ENCODE measurements at regions of chr7 and their contacts with region 1.

Region 1: DNA sequence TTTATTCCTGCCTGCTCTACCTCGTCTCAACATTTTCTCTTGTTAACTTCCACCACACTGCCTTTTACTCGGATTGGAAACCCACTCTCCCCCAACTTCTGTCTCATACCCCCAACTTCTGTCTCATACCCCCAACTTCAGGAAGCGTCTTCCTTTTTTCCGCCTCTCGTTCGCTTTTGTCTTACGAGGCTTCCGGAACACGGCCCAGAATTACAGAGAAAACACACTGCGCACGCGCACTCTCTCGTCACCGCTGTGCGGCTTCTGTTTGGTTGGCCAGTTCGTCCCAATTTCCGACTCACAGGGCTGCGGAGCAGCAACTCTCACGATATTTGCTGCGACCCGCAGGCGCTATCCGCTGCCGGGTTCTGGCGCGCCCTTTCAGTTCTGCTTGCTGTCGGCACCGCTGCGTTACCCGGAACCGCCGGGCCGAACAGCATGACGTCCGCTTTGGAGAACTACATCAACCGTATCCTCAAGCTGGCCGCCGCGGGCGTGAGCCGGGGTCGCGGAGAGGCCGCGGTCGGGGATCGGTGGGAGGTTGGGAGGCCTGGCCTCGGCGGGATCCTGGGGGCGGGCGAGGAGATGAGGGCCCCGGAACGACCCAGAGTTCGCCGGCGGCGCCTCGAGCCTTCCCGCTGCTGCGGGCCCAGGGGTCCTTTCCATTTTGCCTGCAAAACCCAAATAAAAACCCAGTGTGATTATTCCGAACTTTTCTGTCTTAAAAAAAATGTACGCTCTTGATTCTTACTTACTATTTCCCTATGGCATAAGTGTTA is at the start of gene LSM8:
- DNase-seq: peak; percentile 98
- H3K4me3 Mint-ChIP-seq: peak within 1 kb of the TSS; percentile 95
- H3K27ac Mint-ChIP-seq: peak within 1 kb of the TSS; percentile 98
- H3K4me1 Mint-ChIP-seq: peaks cover 32% of the 10 kb centered on the region
- H3K27me3 Mint-ChIP-seq: no peaks in the 10 kb centered on the region
- total RNA-seq, gene LSM8: 39.1 to 43.3 TPM

Region 2: GRCh38 chr7:116953727-116954442 is 1230.1 kb before region 1 on chr7:
- CTCF ChIA-PET with region 1: no interaction called
- intact Hi-C with region 1: loop called (anchors 1 kb)
- DNase-seq: peak; percentile 40
- H3K4me3 Mint-ChIP-seq: peak overlapping the region; percentile 92
- H3K27ac Mint-ChIP-seq: peak overlapping the region; percentile 87
- H3K4me1 Mint-ChIP-seq: peaks cover 21% of the 10 kb centered on the region
- H3K27me3 Mint-ChIP-seq: no peaks in the 10 kb centered on the region

Region 3: GRCh38 chr7:118080947-118081346 is 103.0 kb before region 1 on chr7:
- CTCF ChIA-PET with region 1: no interaction called
- intact Hi-C with region 1: loop called (anchors 2 kb)
- DNase-seq: peak; percentile 65
- H3K4me3 Mint-ChIP-seq: no peak overlapping the region
- H3K27ac Mint-ChIP-seq: no peak overlapping the region
- H3K4me1 Mint-ChIP-seq: peaks cover 16% of the 10 kb centered on the region
- H3K27me3 Mint-ChIP-seq: peaks cover 36% of the 10 kb centered on the region

Region 4: DNA sequence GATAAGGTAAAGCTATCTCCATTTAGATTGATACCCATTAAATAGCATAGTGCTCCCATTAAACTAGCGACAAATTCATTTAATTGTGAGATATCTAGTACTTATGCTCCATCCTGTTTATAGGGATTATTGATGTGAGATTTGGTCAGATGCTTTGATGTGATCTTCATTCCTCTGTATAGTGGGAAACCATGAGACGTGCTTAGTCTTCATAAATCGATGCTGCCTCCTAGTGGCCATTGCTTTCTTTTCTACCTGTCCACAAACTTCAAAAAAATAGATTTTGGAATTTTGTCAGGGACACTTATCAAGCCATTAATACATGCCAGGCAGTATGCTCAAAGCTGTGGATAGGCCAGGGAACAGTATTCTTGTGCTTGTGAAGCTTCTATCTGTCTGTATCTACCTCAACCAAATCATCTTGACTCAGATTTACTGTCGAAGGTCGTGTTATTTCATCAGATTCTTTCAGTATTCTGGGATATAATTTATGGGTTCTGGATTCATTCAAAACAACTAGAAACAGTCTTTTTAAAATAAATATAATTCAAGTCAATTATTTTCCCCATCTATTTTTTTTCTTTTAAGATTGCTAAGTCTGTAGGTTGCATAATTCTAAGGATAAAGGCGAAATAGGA is 12.0 kb after region 1 on chr7:
- CTCF ChIA-PET with region 1: interaction called, 4 read pairs
- intact Hi-C with region 1: loop called (anchors 1 kb)
- DNase-seq: peak; percentile 76
- H3K4me3 Mint-ChIP-seq: no peak overlapping the region
- H3K27ac Mint-ChIP-seq: no peak overlapping the region
- H3K4me1 Mint-ChIP-seq: peaks cover 2% of the 10 kb centered on the region
- H3K27me3 Mint-ChIP-seq: no peaks in the 10 kb centered on the region

Region 5: DNA sequence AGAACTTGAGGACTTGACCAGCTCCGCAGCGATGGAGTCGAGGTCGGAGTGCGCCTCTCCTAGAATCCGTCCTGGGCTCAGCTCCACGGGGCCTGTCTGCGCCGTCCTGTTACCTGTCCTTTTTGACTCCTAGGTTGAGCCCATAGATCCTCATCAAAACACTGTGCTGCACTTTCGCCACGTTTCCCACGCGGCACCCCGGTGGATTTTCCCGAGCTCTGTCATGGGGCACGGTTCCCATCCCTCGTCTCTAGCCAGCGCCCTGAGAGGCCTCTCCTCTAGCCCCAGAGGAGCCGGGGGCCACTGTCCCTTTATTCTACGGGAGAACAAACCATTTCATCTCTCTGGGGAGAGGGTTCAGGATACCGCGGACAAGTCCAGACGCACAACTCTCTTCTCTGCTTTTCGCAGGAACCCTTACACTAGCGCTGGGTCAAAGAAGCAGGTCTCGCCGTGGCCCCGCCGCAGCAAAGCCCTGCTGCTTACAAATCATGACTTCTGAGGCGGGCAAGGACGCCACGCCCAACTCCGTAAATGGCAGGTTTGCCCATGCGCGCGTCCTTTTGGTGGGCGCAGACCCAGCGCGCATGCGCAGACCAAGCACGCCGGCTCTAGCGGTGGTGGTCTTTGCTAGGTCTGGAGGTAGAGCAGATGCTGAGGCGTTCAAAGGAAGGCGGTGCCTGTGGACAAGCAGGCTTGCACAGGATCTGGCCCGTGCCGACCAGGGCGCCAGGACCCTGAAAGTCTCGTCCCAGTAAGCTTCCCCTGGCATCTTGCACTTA is 30.3 kb after region 1 on chr7:
- CTCF ChIA-PET with region 1: no interaction called
- intact Hi-C with region 1: loop called (anchors 1 kb)
- DNase-seq: peak; percentile 67
- H3K4me3 Mint-ChIP-seq: peak overlapping the region; percentile 73
- H3K27ac Mint-ChIP-seq: peak overlapping the region; percentile 38
- H3K4me1 Mint-ChIP-seq: peaks cover 12% of the 10 kb centered on the region
- H3K27me3 Mint-ChIP-seq: peaks cover 25% of the 10 kb centered on the region